ENCODE measurements at regions of chr2 and their contacts with region 1.

Region 1: GRCh38 chr2:237474931-237475703 is 11.9 kb upstream of the MLPH start:
- DNase-seq: peak; percentile 85 to 96 (median 95)
- ATAC-seq: peak; percentile 89 to 92
- H3K4me3 ChIP-seq: peak overlapping the region; percentile 77
- H3K27ac ChIP-seq: peak overlapping the region; percentile 89
- H3K4me1 ChIP-seq: peaks cover 3% of the 10 kb centered on the region
- H3K27me3 ChIP-seq: no peaks in the 10 kb centered on the region

Region 2: GRCh38 chr2:237154082-237154638 is 321.0 kb before region 1 on chr2:
- intact Hi-C with region 1: loop called in 2 of 4 experiments (anchors 10 kb)
- DNase-seq: peak in 1 of 3 donors; percentile 65
- ATAC-seq: no peak
- H3K4me3 ChIP-seq: no peak overlapping the region
- H3K27ac ChIP-seq: no peak overlapping the region
- H3K4me1 ChIP-seq: no peaks in the 10 kb centered on the region
- H3K27me3 ChIP-seq: no peaks in the 10 kb centered on the region

Region 3: GRCh38 chr2:237374284-237375060 is 100.6 kb before region 1 on chr2:
- intact Hi-C with region 1: no loop called
- DNase-seq: no peak
- ATAC-seq: no peak
- H3K4me3 ChIP-seq: no peak overlapping the region
- H3K27ac ChIP-seq: no peak overlapping the region
- H3K4me1 ChIP-seq: no peaks in the 10 kb centered on the region
- H3K27me3 ChIP-seq: no peaks in the 10 kb centered on the region

Region 4: DNA sequence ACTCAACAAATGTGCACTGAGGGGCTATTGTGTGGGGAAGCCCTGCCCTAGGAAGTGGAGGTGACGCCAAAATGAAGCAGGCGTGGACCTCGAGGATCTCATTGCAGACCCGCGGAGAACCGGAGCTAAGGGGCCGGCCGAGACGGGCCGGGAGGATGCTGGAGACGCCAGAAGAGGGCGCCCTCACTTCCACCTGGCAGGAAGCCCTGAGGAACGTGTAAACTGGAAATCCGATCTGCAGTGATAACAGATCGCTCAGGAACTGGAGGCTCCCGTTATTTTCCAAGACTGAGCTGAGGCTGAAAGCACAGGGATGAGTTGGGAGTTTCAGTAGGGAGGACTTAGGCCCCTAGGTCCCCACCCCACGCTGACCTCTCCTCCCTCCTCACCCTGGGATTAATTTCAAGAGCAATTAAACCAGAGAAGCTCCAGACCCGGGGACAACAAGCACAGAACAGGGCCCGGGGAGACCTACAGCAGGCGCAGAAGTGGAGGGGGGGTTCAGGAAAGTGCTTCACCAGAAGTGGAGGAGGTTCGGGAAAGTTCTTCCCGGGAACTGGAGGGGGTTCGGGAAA is 53.5 kb before region 1 on chr2:
- intact Hi-C with region 1: loop called (anchors 2 to 10 kb)
- DNase-seq: peak; percentile 83 to 92 (median 90)
- ATAC-seq: peak; percentile 83 to 90
- H3K4me3 ChIP-seq: peak overlapping the region; percentile 16
- H3K27ac ChIP-seq: no peak overlapping the region
- H3K4me1 ChIP-seq: peaks cover 3% of the 10 kb centered on the region
- H3K27me3 ChIP-seq: no peaks in the 10 kb centered on the region

Region 5: DNA sequence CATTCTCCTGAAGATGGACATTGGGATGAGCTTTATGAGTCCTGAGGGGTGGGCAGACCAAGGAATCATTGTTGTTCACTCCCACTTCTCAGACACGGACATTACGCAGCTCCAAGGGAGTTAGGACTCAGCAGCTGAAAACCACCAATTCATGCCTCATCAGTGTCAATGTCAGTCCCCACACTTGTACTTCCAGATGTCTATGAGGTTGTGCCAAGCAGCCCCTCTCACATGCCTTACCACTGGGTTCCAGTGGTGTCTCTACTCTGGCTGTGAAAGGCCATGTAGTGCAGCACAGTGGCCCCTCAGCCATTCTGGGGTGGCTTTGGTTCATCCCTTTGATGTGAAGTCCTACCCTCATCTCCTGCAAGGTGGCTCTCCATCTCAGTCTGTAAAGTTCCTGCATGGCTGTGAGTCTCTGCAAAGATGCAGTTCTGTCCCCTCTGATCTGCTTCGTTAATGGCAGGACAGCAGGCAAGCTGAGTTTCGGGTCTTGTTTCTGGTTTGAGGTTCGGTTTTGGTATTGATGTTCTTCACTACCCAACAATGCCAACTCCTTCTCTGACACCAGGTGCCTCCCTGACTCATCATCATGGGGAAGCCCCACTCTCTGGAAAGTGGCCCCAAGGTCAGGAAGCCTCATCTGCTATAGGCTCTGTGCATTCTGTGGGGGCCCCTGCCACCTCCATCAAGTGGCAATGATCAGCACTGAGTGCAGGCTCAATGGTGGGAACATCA is 47.2 kb before region 1 on chr2:
- intact Hi-C with region 1: loop called (anchors 2 to 10 kb)
- DNase-seq: no peak
- ATAC-seq: no peak
- H3K4me3 ChIP-seq: no peak overlapping the region
- H3K27ac ChIP-seq: no peak overlapping the region
- H3K4me1 ChIP-seq: no peaks in the 10 kb centered on the region
- H3K27me3 ChIP-seq: no peaks in the 10 kb centered on the region